Head of caudate nucleus (tissue), 42 donors: ENCODE measurements at regions of chr4 and their contacts with region 1.

Region 1: GRCh38 chr4:143482840-143483239 is 30.7 kb upstream of the SMARCA5 start:
- DNase-seq: peak in 28 of 42 donors; percentile 18 to 80 (median 47)

Region 2: GRCh38 chr4:143207557-143207956 is 275.3 kb before region 1 on chr4:
- intact Hi-C with region 1: loop called (anchors 10 kb)
- DNase-seq: peak in 1 of 42 donors; percentile 27

Region 3: GRCh38 chr4:143375313-143376073 is 107.3 kb before region 1 on chr4:
- intact Hi-C with region 1: loop called (anchors 5 kb)
- DNase-seq: peak; percentile 26 to 90 (median 74)